Tibial artery (tissue), 4 donors: ENCODE measurements at regions of chr11 and their contacts with region 1.

Region 1: GRCh38 chr11:121520243-121521144 is 67.7 kb upstream of the SORL1-AS1 start:
- DNase-seq: peak in 1 of 2 donors; percentile 28
- H3K4me3 ChIP-seq: peak overlapping the region; percentile 0 to 6
- H3K27ac ChIP-seq: peak overlapping the region; percentile 54 to 72
- H3K4me1 ChIP-seq: peaks cover 0 to 45% (median 26%) of the 10 kb centered on the region in 4 donors
- H3K27me3 ChIP-seq: no peaks in the 10 kb centered on the region
- CTCF ChIP-seq: peak in 1 of 2 experiments; percentile 4

Region 2: GRCh38 chr11:121451986-121452608 is 68.4 kb before region 1 on chr11 and contains the start of gene SORL1:
- intact Hi-C with region 1: loop called (anchors 5 kb)
- DNase-seq: peak; percentile 52 to 88
- H3K4me3 ChIP-seq: peak within 1 kb of the TSS; percentile 92 to 93
- H3K27ac ChIP-seq: peak within 1 kb of the TSS; percentile 57 to 68
- H3K4me1 ChIP-seq: peaks cover 0 to 32% (median 14%) of the 10 kb centered on the region in 4 donors
- H3K27me3 ChIP-seq: no peaks in the 10 kb centered on the region
- CTCF ChIP-seq: peak; percentile 62 to 86

Region 3: DNA sequence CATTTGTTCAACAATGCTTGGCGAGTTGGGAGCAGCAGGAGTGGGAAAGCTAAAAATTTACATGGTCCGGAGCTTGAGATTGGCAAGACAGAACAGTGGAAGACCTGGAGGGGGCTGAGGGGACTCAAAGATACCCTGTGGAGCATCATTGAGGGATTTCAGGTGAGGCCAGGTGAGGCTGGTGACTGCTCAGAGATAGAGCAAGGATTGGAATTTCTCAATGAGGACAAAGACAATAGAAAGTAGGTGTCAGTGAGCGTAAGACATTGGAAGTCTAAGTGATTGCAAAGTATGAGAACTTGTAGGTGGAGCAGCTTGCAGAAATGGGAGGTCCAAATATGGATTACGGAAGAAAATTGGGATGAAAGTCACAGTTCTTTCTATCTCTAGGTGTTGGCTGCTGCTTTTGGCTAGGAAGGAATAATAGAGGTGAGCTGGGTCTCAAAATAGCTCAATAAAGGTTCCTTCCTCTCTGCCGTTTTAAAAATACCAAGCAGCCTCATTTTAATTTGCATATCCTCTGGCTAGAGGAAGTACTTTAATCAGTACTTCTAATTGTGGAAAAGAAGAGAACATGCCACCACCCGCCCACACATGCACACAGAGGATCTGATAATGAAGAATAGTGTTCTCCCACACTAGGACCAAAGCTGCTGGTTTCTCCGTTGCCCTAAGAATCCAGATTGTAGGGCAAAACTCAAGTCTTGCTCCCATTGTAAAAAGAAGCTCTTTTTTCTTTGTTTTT is 26.0 kb before region 1 on chr11:
- intact Hi-C with region 1: no loop called
- DNase-seq: no peak
- H3K4me3 ChIP-seq: no peak overlapping the region
- H3K27ac ChIP-seq: no peak overlapping the region
- H3K4me1 ChIP-seq: no peaks in the 10 kb centered on the region
- H3K27me3 ChIP-seq: no peaks in the 10 kb centered on the region
- CTCF ChIP-seq: no peak

Region 4: GRCh38 chr11:122038543-122038942 is 518.0 kb after region 1 on chr11:
- intact Hi-C with region 1: no loop called
- DNase-seq: no peak
- H3K4me3 ChIP-seq: no peak overlapping the region
- H3K27ac ChIP-seq: peak overlapping the region in 1 of 2 donors; percentile 26
- H3K4me1 ChIP-seq: peaks cover 0 to 50% (median 11%) of the 10 kb centered on the region in 4 donors
- H3K27me3 ChIP-seq: no peaks in the 10 kb centered on the region
- CTCF ChIP-seq: no peak

Region 5: GRCh38 chr11:122505304-122506006 is 985.0 kb after region 1 on chr11:
- intact Hi-C with region 1: loop called (anchors 10 kb)
- DNase-seq: peak; percentile 90 to 92
- H3K4me3 ChIP-seq: no peak overlapping the region
- H3K27ac ChIP-seq: peak overlapping the region; percentile 13 to 55
- H3K4me1 ChIP-seq: peaks cover 0 to 7% (median 3%) of the 10 kb centered on the region in 4 donors
- H3K27me3 ChIP-seq: no peaks in the 10 kb centered on the region
- CTCF ChIP-seq: peak; percentile 75 to 92